MCF 10A (cell line): ENCODE measurements at regions of chr2 and their contacts with region 1.

Region 1: GRCh38 chr2:1886405-1886992 is 142.2 kb upstream of the PXDN start:
- DNase-seq: peak; percentile 74
- H3K4me3 Mint-ChIP-seq: no peak overlapping the region
- H3K27ac Mint-ChIP-seq: no peak overlapping the region
- H3K4me1 Mint-ChIP-seq: peaks cover 10% of the 10 kb centered on the region
- H3K27me3 Mint-ChIP-seq: peaks cover 25% of the 10 kb centered on the region
- CTCF ChIP-seq: peak; percentile 39

Region 2: DNA sequence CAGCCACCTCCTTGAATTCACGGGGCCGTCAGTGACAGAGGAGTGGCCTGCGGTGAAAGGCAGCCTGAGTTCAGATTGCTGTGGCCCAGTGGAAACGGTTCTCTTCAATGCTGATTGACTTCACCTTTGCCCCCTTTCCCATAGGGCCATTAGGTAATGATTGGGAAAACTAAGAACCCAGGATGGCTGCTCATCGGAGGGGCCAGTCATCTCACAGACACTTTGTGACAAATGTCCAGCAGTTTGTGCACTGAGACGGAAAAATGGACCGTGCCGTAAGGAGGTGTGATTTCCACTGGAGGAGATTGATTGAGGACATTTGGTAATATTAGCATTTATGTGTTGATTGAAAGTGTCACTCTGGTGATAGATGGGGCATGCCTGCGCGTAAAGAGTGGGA is 533.0 kb before region 1 on chr2:
- CTCF ChIA-PET with region 1: no interaction called
- POLR2A ChIA-PET with region 1: no interaction called
- intact Hi-C with region 1: no loop called
- DNase-seq: no peak
- H3K4me3 Mint-ChIP-seq: no peak overlapping the region
- H3K27ac Mint-ChIP-seq: no peak overlapping the region
- H3K4me1 Mint-ChIP-seq: no peaks in the 10 kb centered on the region
- H3K27me3 Mint-ChIP-seq: peaks cover 7% of the 10 kb centered on the region
- CTCF ChIP-seq: no peak

Region 3: GRCh38 chr2:1869987-1870386 is 16.5 kb before region 1 on chr2:
- CTCF ChIA-PET with region 1: interaction called, 32 read pairs
- POLR2A ChIA-PET with region 1: no interaction called
- intact Hi-C with region 1: no loop called
- DNase-seq: peak; percentile 59
- H3K4me3 Mint-ChIP-seq: peak overlapping the region; percentile 38
- H3K27ac Mint-ChIP-seq: no peak overlapping the region
- H3K4me1 Mint-ChIP-seq: peaks cover 19% of the 10 kb centered on the region
- H3K27me3 Mint-ChIP-seq: peaks cover 36% of the 10 kb centered on the region
- CTCF ChIP-seq: no peak

Region 4: DNA sequence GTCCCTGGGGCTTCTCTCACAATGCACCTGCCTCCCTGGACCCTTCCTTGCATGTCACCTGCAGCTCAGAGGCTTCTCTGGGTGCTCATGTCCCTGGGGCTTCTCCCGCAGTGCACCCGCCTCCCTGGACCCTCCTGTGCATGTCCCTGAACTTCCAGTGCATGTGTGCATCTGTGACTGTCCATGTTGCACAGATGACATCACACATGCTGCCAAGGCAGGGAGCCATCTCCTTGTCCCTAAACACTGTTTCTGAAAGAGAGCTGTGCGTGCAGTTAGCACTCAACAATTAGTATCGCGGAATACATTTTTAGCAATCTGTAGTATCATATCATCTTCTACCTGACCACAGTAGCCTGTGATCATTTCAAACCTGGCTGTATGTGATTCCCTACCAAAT is 74.3 kb after region 1 on chr2:
- CTCF ChIA-PET with region 1: no interaction called
- POLR2A ChIA-PET with region 1: no interaction called
- intact Hi-C with region 1: no loop called
- DNase-seq: no peak
- H3K4me3 Mint-ChIP-seq: no peak overlapping the region
- H3K27ac Mint-ChIP-seq: no peak overlapping the region
- H3K4me1 Mint-ChIP-seq: no peaks in the 10 kb centered on the region
- H3K27me3 Mint-ChIP-seq: no peaks in the 10 kb centered on the region
- CTCF ChIP-seq: no peak

Region 5: GRCh38 chr2:2095360-2096093 is 209.0 kb after region 1 on chr2:
- CTCF ChIA-PET with region 1: no interaction called
- POLR2A ChIA-PET with region 1: no interaction called
- intact Hi-C with region 1: loop called (anchors 10 kb)
- DNase-seq: no peak
- H3K4me3 Mint-ChIP-seq: no peak overlapping the region
- H3K27ac Mint-ChIP-seq: no peak overlapping the region
- H3K4me1 Mint-ChIP-seq: no peaks in the 10 kb centered on the region
- H3K27me3 Mint-ChIP-seq: peaks cover 21% of the 10 kb centered on the region
- CTCF ChIP-seq: no peak

Region 6: GRCh38 chr2:2134042-2134441 is 247.5 kb after region 1 on chr2:
- CTCF ChIA-PET with region 1: no interaction called
- POLR2A ChIA-PET with region 1: no interaction called
- intact Hi-C with region 1: no loop called
- DNase-seq: no peak
- H3K4me3 Mint-ChIP-seq: no peak overlapping the region
- H3K27ac Mint-ChIP-seq: no peak overlapping the region
- H3K4me1 Mint-ChIP-seq: no peaks in the 10 kb centered on the region
- H3K27me3 Mint-ChIP-seq: peaks cover 71% of the 10 kb centered on the region
- CTCF ChIP-seq: no peak

Region 7: DNA sequence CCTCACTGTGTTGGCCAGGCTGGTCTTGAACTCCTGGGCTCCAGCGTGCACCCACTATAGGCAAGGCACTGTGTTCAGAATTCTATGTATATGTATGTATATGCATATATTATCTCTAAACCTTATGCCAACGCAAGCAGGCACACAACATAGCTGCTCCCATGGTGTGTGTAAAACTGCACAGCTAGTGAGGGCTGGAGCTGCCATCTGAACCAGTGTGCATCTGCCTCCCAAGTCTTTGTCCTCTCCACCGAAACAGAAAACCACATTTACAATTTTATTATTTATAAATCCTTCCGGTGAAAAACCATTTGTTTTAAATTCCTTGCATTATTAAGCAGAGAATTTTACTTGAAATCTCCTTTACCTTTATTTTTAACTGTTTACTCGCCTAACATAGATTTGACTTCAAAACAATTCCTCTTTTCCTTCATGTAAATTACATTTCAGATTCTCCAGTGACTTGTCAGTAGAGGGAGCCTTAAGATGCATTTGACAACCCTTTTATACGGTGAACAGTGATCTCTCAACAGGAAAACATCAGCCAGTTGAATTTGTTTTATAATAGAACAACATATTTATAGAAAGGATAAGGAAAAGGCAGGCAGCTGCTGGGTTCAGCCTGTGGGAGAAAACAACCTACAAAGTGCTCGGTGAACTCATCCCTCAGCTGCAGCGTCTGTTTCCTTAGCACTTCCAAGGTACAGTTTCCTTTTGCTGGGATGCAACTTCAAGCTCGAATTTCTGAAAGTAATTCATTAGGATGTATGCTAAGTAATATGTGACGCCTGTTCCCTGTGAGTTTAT is 343.3 kb after region 1 on chr2:
- CTCF ChIA-PET with region 1: interaction called, 4 read pairs
- POLR2A ChIA-PET with region 1: no interaction called
- intact Hi-C with region 1: loop called (anchors 10 kb)
- DNase-seq: no peak
- H3K4me3 Mint-ChIP-seq: no peak overlapping the region
- H3K27ac Mint-ChIP-seq: no peak overlapping the region
- H3K4me1 Mint-ChIP-seq: no peaks in the 10 kb centered on the region
- H3K27me3 Mint-ChIP-seq: peaks cover 40% of the 10 kb centered on the region
- CTCF ChIP-seq: peak; percentile 20

Region 8: GRCh38 chr2:2291500-2292260 is 405.2 kb after region 1 on chr2:
- CTCF ChIA-PET with region 1: no interaction called
- POLR2A ChIA-PET with region 1: interaction called, 3 read pairs
- intact Hi-C with region 1: loop called (anchors 5 kb)
- DNase-seq: no peak
- H3K4me3 Mint-ChIP-seq: no peak overlapping the region
- H3K27ac Mint-ChIP-seq: no peak overlapping the region
- H3K4me1 Mint-ChIP-seq: no peaks in the 10 kb centered on the region
- H3K27me3 Mint-ChIP-seq: peaks cover 43% of the 10 kb centered on the region
- CTCF ChIP-seq: peak; percentile 19

Region 9: DNA sequence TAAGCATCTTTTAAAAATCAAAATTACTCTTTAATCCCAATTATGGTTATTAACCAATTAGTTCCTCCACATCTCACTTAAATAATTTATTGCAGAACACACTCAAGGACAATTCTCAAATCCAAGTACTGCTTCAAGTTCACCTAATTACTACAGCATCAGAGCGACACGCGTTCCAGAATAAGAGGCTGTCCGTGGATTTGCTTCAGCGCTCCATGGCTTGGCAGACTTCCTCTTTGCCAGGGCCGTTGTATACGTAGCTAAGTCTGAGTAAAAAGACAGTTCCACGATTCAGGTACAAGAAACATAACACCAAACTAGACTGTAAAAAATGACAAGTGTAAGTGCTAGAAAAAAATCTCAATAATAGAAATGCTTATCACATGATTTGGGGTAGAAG is 597.8 kb after region 1 on chr2:
- CTCF ChIA-PET with region 1: no interaction called
- POLR2A ChIA-PET with region 1: no interaction called
- intact Hi-C with region 1: loop called (anchors 5 kb)
- DNase-seq: no peak
- H3K4me3 Mint-ChIP-seq: no peak overlapping the region
- H3K27ac Mint-ChIP-seq: no peak overlapping the region
- H3K4me1 Mint-ChIP-seq: no peaks in the 10 kb centered on the region
- H3K27me3 Mint-ChIP-seq: peaks cover 7% of the 10 kb centered on the region
- CTCF ChIP-seq: no peak